Aorta (tissue), 5 donors: ENCODE measurements at regions of chr1 and their contacts with region 1.

Region 1: DNA sequence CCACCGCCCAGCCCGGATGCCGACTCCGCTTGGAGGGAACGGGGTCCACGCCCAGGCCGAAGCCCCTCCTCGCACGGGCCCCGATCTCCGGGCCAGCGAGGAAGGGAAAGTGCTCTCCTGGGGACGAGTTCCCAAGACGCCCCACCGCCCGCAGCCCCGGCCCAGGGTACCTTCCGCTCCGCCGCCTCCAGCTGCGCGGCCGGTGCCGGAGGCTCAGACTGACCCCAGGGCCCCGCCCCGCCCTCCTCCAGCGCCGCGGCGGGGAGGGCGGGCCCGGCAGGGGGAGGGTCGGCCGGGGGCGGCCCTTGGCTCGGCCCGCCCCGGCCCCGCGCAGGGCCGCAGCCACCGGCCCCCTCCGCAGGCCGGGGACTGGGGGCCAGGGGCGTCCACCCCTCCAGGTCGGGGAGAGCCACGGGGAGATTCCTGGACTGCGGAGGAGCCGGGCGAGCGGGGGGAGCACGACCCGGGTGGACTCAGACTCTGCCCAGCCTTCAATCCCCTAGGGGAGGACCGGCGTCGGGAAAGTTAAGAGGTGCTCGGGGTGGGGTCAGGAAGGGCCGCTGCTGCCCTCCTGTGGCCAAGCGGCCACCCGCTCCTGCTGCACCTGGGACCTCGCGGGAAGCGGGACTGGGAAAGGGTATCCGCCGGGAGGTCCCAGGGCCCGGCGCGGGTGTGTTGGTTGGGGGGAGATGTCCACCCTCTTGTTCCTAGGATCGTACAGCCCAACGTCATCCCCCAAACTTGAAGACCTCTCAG is at the start of gene RHOC:
- DNase-seq: peak; percentile 91 to 95
- ATAC-seq: peak; percentile 91
- H3K4me3 ChIP-seq: peak within 1 kb of the TSS; percentile 75 to 91
- H3K27ac ChIP-seq: peak within 1 kb of the TSS; percentile 85 to 90
- H3K4me1 ChIP-seq: no peaks in the 10 kb centered on the region
- H3K27me3 ChIP-seq: no peaks in the 10 kb centered on the region
- total RNA-seq, gene RHOC: 269 to 316 TPM

Region 2: GRCh38 chr1:112395821-112396652 is 311.0 kb before region 1 on chr1 and contains the start of gene CTTNBP2NL:
- intact Hi-C with region 1: loop called (anchors 2 to 5 kb)
- DNase-seq: peak; percentile 98
- ATAC-seq: peak; percentile 96
- H3K4me3 ChIP-seq: peak within 1 kb of the TSS; percentile 63 to 93
- H3K27ac ChIP-seq: peak within 1 kb of the TSS; percentile 91 to 100
- H3K4me1 ChIP-seq: peaks cover 4 to 7% of the 10 kb centered on the region in 2 donors
- H3K27me3 ChIP-seq: no peaks in the 10 kb centered on the region
- total RNA-seq, gene CTTNBP2NL: 59.2 to 65.8 TPM

Region 3: DNA sequence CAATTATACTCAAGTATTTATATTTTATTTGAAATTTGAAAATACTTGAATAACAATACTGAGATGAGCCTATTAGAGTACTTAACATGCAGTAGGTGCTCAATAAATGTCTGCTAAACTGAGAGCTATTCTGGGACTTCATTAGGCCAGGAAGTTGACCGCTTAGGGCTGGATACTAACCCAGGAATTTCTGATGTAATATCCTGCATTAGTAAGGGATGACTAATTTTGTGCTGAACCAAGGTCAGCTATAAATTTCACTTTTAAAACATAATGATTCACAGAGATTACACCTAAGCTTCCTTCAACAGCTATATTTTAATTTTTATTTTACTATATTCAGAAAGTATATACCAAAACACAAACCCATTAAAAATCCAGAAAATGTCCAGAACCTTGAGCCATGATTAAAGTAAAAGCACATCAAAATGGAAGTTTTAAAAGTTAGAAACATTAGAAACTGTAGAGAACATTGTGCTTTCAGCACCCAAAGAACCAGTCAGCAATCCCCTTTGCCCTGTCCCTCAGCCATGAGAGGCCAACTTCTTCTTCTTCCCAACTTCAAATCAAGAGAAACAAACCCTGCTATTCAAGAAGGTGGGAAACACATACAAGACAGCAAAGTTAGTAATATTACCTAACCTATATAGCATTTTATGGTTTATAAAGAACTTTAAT is 162.9 kb before region 1 on chr1:
- intact Hi-C with region 1: loop called in 1 of 2 experiments (anchors 10 kb)
- DNase-seq: no peak
- ATAC-seq: peak; percentile 76
- H3K4me3 ChIP-seq: no peak overlapping the region
- H3K27ac ChIP-seq: peak overlapping the region; percentile 85 to 90
- H3K4me1 ChIP-seq: peaks cover 0 to 4% of the 10 kb centered on the region in 2 donors
- H3K27me3 ChIP-seq: no peaks in the 10 kb centered on the region

Region 4: GRCh38 chr1:112637254-112638116 is 69.6 kb before region 1 on chr1:
- intact Hi-C with region 1: loop called in 1 of 2 experiments (anchors 5 kb)
- DNase-seq: no peak
- ATAC-seq: no peak
- H3K4me3 ChIP-seq: no peak overlapping the region
- H3K27ac ChIP-seq: no peak overlapping the region
- H3K4me1 ChIP-seq: no peaks in the 10 kb centered on the region
- H3K27me3 ChIP-seq: no peaks in the 10 kb centered on the region

Region 5: GRCh38 chr1:112803906-112804762 is 97.0 kb after region 1 on chr1:
- intact Hi-C with region 1: no loop called
- DNase-seq: peak; percentile 74 to 80
- ATAC-seq: no peak
- H3K4me3 ChIP-seq: no peak overlapping the region
- H3K27ac ChIP-seq: no peak overlapping the region
- H3K4me1 ChIP-seq: no peaks in the 10 kb centered on the region
- H3K27me3 ChIP-seq: no peaks in the 10 kb centered on the region